ENCODE measurements at regions of chr21 and their contacts with region 1.

Region 1: GRCh38 chr21:44927587-44928461 is 7.1 kb upstream of the ITGB2 start:
- DNase-seq: peak; percentile 92 to 95
- H3K4me3 ChIP-seq: peak overlapping the region; percentile 39; the same call in 1 of the 2 replicates
- H3K27ac ChIP-seq: peak overlapping the region; percentile 97
- H3K4me1 ChIP-seq: peaks cover 62% of the 10 kb centered on the region
- H3K27me3 ChIP-seq: no peaks in the 10 kb centered on the region
- CTCF ChIP-seq: peak; percentile 45; the same call in 1 of the 2 replicates

Region 2: GRCh38 chr21:44304877-44305293 is 622.9 kb before region 1 on chr21:
- CTCF ChIA-PET with region 1: no interaction called
- POLR2A ChIA-PET with region 1: no interaction called
- intact Hi-C with region 1: no loop called
- DNase-seq: no peak
- H3K4me3 ChIP-seq: no peak overlapping the region
- H3K27ac ChIP-seq: no peak overlapping the region
- H3K4me1 ChIP-seq: 0 out of 2 replicates have a peak, but pooled peaks cover 6% of the 10 kb centered on the region
- H3K27me3 ChIP-seq: no peaks in the 10 kb centered on the region
- CTCF ChIP-seq: peak; percentile 62

Region 3: GRCh38 chr21:44801468-44802395 is 126.1 kb before region 1 on chr21 and contains the start of gene UBE2G2:
- CTCF ChIA-PET with region 1: interaction called, 14 read pairs
- POLR2A ChIA-PET with region 1: interaction called, 4 read pairs
- intact Hi-C with region 1: loop called (anchors 5 kb)
- DNase-seq: peak; percentile 47 to 77
- H3K4me3 ChIP-seq: peak within 1 kb of the TSS; percentile 88
- H3K27ac ChIP-seq: no peak within 1 kb of the TSS
- H3K4me1 ChIP-seq: peaks cover 11% of the 10 kb centered on the region
- H3K27me3 ChIP-seq: no peaks in the 10 kb centered on the region
- CTCF ChIP-seq: no peak; the same call in 1 of the 2 replicates
- total RNA-seq, gene UBE2G2: 51.9 and 52.7 TPM in 2 replicates

Region 4: DNA sequence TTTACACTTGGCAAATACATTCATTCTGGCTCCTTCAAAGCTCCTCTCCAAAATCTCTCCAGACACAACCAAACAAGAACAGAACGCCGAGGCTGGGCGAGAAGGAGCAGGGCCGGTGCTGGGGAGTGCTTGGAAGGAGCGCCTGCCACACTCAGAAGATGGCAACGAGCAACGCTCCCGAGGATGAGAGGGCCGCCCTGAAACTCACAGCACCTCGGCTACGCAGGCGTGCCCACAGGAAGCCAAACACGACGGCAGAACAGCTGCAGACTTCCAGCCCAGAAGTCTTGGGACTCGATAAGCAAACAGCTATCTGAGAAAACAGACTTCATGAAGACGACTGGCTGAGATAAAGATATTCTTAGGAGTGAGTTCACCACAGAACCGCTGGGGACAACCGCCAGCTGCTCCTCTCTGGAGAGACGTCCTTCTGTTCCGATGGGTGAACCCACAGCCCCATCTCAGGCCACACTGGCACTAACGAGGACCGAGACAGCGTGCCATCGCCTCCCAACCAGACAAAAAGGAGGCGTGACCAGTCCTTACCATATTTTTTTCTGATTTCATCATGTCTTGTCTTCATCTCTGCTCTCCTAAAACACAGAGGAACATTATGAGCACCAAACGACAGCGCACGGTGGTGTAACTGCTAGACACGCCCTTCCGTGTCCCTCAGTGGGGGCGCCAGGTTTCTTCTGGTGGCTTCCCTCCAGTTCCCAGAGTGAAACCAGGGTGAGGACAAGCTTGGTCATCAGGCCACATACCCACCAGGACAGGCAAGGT is 73.0 kb before region 1 on chr21:
- CTCF ChIA-PET with region 1: no interaction called
- POLR2A ChIA-PET with region 1: no interaction called
- intact Hi-C with region 1: no loop called
- DNase-seq: no peak
- H3K4me3 ChIP-seq: no peak overlapping the region
- H3K27ac ChIP-seq: no peak overlapping the region
- H3K4me1 ChIP-seq: peaks cover 11% of the 10 kb centered on the region; the same call in 1 of the 2 replicates
- H3K27me3 ChIP-seq: no peaks in the 10 kb centered on the region
- CTCF ChIP-seq: no peak

Region 5: GRCh38 chr21:44883250-44883649 is 44.6 kb before region 1 on chr21:
- CTCF ChIA-PET with region 1: no interaction called
- POLR2A ChIA-PET with region 1: interaction called, 5 read pairs
- intact Hi-C with region 1: loop called (anchors 2 kb)
- DNase-seq: no peak
- H3K4me3 ChIP-seq: no peak overlapping the region
- H3K27ac ChIP-seq: peak overlapping the region; percentile 89
- H3K4me1 ChIP-seq: peaks cover 48% of the 10 kb centered on the region
- H3K27me3 ChIP-seq: no peaks in the 10 kb centered on the region
- CTCF ChIP-seq: no peak

Region 6: DNA sequence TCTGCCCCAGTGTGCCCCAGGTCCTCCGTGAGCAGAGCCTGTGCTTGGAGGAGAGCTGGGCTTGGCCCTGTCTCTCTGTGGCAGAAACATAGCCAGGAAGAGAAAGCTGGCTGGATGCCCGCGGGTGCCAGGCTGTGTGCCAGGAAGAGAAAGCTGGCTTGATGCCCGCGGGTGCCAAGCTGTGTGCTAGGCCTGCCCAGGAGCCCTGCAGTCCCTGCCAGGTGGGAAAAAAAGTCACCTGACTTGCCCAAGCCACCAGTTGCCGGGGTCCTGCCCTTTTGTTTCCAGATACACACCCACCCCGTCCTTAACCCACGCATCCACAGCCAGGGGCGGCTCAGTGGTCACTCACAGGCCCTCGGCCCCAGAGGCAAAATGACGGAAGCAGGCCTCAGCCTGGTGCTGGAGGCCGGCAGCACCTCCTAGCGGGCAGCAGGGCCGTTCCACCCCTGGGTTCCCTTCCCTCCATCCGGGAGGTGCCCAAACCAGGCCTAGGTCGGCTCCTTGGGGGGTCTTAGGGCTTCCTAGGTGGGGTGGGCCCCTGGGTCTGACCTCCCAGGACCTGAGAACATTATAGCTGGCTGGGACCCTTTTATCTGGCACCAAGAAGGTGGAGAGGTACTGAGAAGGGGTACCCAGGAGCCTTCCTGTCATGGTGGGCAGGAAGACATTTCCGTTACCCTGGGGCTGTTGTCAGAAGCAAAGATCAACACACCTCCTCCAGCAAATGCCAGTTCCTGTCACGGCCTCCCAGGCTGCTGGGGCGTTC is 16.3 kb before region 1 on chr21:
- CTCF ChIA-PET with region 1: interaction called, 16 read pairs
- POLR2A ChIA-PET with region 1: interaction called, 23 read pairs
- intact Hi-C with region 1: loop called (anchors 1 kb)
- DNase-seq: peak; percentile 84
- H3K4me3 ChIP-seq: no peak overlapping the region
- H3K27ac ChIP-seq: peak overlapping the region; percentile 74
- H3K4me1 ChIP-seq: peaks cover 57% of the 10 kb centered on the region
- H3K27me3 ChIP-seq: no peaks in the 10 kb centered on the region
- CTCF ChIP-seq: peak; percentile 76